ENCODE measurements at regions of chr1 and their contacts with region 1.

Region 1: GRCh38 chr1:230109895-230110667 is 43.0 kb downstream of the GALNT2 start:
- DNase-seq: no peak
- H3K4me3 ChIP-seq: no peak overlapping the region
- H3K27ac ChIP-seq: peak overlapping the region in 4 of 59 donors; percentile 18 to 59 (median 36)
- H3K27me3 ChIP-seq: no peaks in the 10 kb centered on the region
- CTCF ChIP-seq: no peak

Region 2: DNA sequence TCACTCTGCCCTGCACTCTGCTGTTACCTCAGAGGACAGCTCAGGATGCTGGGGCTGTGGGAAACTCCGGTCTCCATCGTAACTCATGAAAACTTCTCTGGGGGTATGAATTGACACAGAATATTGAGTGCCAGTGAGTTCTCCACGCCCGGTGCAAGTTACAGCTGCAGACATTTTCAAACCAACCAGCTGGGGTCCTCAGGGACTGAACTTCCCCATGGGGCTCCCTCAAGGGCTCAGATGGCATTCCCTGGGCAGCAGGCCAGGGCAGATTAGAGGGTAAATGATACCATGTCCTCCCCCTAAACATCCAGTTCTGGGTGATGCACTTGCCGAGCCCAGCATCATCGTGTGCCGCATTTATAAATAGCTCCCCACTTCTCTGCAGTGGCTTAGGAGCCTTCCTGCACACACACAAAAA is 739.5 kb before region 1 on chr1:
- intact Hi-C with region 1: no loop called
- DNase-seq: peak in 5 of 10 donors; percentile 14 to 36 (median 27)
- H3K4me3 ChIP-seq: peak overlapping the region in 28 of 59 donors; percentile 6 to 51 (median 24)
- H3K27ac ChIP-seq: peak overlapping the region in 2 of 59 donors; percentile 4 to 21
- H3K27me3 ChIP-seq: peaks cover 0 to 7% (median 0%) of the 10 kb centered on the region in 45 donors
- CTCF ChIP-seq: peak in 9 of 56 donors; percentile 13 to 40 (median 23)

Region 3: GRCh38 chr1:230073371-230074035 is 36.6 kb before region 1 on chr1:
- intact Hi-C with region 1: loop called in 1 of 2 experiments (anchors 2 kb)
- DNase-seq: peak in 6 of 10 donors; percentile 37 to 69 (median 58)
- H3K4me3 ChIP-seq: peak overlapping the region in 1 of 59 donors; percentile 9
- H3K27ac ChIP-seq: peak overlapping the region in 40 of 59 donors; percentile 2 to 72 (median 46)
- H3K27me3 ChIP-seq: no peaks in the 10 kb centered on the region
- CTCF ChIP-seq: no peak

Region 4: DNA sequence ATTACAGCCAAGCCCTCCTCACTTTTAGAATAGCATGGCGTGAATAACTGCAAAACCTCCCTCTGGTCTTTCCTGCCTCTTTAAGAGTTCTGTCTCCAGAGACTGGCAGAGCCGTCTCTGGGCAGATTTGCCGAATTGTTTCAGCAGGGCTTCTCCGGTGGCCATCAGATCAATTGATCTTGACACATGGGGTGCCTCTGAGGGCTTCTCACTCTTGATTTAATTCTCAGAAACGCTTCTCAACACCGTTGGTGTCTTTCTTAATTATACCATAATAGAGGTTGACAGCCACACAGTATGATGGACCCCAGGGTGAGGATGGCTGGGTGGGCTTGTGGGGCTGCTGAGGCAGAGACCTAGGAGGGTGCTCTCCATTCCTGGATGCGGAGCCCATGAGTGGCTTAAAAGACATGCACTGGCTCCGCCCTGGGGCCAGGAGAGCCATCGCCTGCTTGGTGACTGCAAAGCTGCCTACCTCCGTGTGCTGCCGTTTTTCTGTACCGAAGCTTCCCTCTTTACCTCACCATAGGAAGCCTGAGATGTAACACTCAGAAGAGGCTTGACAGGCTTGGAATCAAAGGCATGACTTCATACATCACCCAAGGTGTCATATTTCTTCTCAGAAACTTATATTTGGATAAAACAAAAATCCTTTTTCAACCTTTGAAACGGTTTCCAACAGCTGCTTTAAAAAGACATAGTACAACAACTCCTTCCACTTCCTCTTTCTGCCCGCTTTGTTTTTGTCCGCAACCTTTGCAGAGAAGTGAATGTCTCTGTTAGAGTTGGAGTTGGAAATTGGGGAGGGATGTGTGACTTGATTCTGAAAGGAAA is 39.9 kb after region 1 on chr1:
- intact Hi-C with region 1: loop called in 1 of 2 experiments (anchors 5 kb)
- DNase-seq: no peak
- H3K4me3 ChIP-seq: peak overlapping the region in 5 of 59 donors; percentile 2 to 22 (median 8)
- H3K27ac ChIP-seq: peak overlapping the region in 16 of 59 donors; percentile 4 to 59 (median 30)
- H3K27me3 ChIP-seq: no peaks in the 10 kb centered on the region
- CTCF ChIP-seq: no peak

Region 5: GRCh38 chr1:230167419-230167852 is 57.4 kb after region 1 on chr1:
- intact Hi-C with region 1: loop called in 1 of 2 experiments (anchors 5 kb)
- DNase-seq: peak in 1 of 10 donors; percentile 10
- H3K4me3 ChIP-seq: no peak overlapping the region
- H3K27ac ChIP-seq: peak overlapping the region in 2 of 59 donors; percentile 16 to 89
- H3K27me3 ChIP-seq: no peaks in the 10 kb centered on the region
- CTCF ChIP-seq: peak; percentile 16 to 73 (median 57)